Natural killer cell (primary cell): ENCODE measurements at regions of chr2 and their contacts with region 1.

Region 1: GRCh38 chr2:43131024-43131889 is 95.1 kb downstream of the ZFP36L2 start:
- DNase-seq: peak; percentile 82 to 92
- ATAC-seq: peak; percentile 63 to 81 (median 72)
- H3K4me3 ChIP-seq: no peak overlapping the region
- H3K4me3 Mint-ChIP-seq: peak overlapping the region; percentile 63
- H3K27ac ChIP-seq: peak overlapping the region; percentile 92
- H3K27ac Mint-ChIP-seq: peak overlapping the region; percentile 87 to 96
- H3K4me1 ChIP-seq: peaks cover 95% of the 10 kb centered on the region
- H3K4me1 Mint-ChIP-seq: peaks cover 80 to 89% of the 10 kb centered on the region in 2 donors
- H3K27me3 ChIP-seq: no peaks in the 10 kb centered on the region
- H3K27me3 Mint-ChIP-seq: no peaks in the 10 kb centered on the region
- CTCF ChIP-seq: peak; percentile 57

Region 2: GRCh38 chr2:42944779-42945415 is 186.4 kb before region 1 on chr2:
- intact Hi-C with region 1: loop called (anchors 5 kb)
- DNase-seq: no peak
- ATAC-seq: no peak
- H3K4me3 ChIP-seq: no peak overlapping the region
- H3K4me3 Mint-ChIP-seq: no peak overlapping the region
- H3K27ac ChIP-seq: no peak overlapping the region
- H3K27ac Mint-ChIP-seq: no peak overlapping the region
- H3K4me1 ChIP-seq: peaks cover 9% of the 10 kb centered on the region
- H3K4me1 Mint-ChIP-seq: peaks cover 5 to 16% of the 10 kb centered on the region in 2 donors
- H3K27me3 ChIP-seq: no peaks in the 10 kb centered on the region
- H3K27me3 Mint-ChIP-seq: peaks cover 0 to 3% of the 10 kb centered on the region in 2 donors
- CTCF ChIP-seq: no peak

Region 3: DNA sequence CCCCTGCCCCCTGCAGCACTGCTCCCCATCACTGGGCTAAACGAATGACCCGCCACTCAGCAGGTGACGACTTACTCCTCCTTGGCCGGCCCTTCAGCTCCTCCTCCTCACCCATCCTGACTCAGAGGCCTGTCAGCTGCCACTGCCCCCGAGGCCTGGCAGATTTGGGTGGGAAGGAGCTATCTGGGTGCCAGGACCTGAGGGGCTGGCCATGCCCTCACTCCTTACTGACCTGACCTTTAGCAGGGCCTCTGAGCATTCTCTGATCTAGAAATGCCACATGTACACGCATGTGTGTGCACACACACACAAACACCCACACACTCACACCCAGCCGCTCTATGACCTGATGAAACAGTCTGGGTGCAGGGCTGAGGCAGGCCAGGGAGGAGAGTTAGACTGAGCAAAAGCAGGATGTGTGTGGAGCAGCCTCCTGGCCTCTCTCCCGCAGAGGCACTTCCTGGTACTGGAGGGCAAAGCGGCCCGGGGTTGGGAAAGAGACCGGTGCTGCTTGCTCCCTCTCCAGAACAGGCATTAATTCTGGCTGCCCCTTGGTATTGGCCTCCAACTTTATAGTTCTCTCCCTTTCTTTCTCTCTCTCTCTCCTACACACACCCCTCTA is 27.1 kb after region 1 on chr2:
- intact Hi-C with region 1: loop called (anchors 1 kb)
- DNase-seq: peak; percentile 39 to 80
- ATAC-seq: peak; percentile 33 to 53 (median 41)
- H3K4me3 ChIP-seq: no peak overlapping the region
- H3K4me3 Mint-ChIP-seq: peak overlapping the region; percentile 64
- H3K27ac ChIP-seq: peak overlapping the region; percentile 97
- H3K27ac Mint-ChIP-seq: peak overlapping the region; percentile 95 to 97
- H3K4me1 ChIP-seq: peaks cover 76% of the 10 kb centered on the region
- H3K4me1 Mint-ChIP-seq: peaks cover 27 to 55% of the 10 kb centered on the region in 2 donors
- H3K27me3 ChIP-seq: no peaks in the 10 kb centered on the region
- H3K27me3 Mint-ChIP-seq: no peaks in the 10 kb centered on the region
- CTCF ChIP-seq: no peak

Region 4: GRCh38 chr2:43186679-43187374 is 55.6 kb after region 1 on chr2:
- intact Hi-C with region 1: no loop called
- DNase-seq: no peak
- ATAC-seq: no peak
- H3K4me3 ChIP-seq: no peak overlapping the region
- H3K4me3 Mint-ChIP-seq: no peak overlapping the region
- H3K27ac ChIP-seq: no peak overlapping the region
- H3K27ac Mint-ChIP-seq: peak overlapping the region in 1 of 2 donors; percentile 71
- H3K4me1 ChIP-seq: peaks cover 17% of the 10 kb centered on the region
- H3K4me1 Mint-ChIP-seq: peaks cover 15 to 40% of the 10 kb centered on the region in 2 donors
- H3K27me3 ChIP-seq: no peaks in the 10 kb centered on the region
- H3K27me3 Mint-ChIP-seq: peaks cover 0 to 2% of the 10 kb centered on the region in 2 donors
- CTCF ChIP-seq: no peak

Region 5: DNA sequence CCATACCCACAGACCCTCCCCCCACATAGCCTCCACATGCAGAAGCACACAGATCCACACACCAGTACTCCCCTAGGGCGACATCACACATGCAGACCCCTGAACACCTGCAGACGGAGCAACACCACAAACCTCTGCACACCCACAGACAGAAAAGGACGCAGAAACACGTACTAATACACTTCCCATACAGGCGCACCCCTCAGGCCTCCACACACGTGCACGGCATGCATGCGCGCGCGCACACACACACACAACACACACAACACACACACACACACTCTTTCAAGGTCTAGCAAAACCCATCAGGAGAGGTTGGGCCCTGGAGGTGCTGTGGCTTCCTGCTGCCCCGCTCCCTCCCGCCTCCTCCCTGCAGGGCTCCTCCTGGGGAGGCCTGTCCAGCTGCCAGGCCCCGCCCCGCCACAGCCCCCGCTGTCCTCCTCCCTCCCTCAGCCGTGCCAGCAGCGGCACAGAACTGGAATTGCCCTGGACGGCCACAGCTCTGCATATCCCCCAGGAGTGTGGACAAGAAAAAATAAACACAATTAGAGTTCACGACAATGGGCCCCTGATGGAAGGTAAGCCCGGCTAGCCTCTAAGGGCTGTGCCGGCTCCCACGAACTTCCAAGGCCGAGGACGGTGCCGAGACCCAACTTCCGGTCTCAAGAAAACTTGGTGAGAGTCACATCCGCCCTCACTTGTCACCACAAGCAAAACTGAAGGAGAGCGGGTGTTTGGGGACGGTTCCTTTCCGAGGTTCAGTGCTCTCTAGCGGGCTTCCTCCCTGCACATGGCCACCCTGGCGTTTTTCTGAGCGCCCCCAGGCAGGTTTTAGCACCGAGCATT is 88.3 kb after region 1 on chr2:
- intact Hi-C with region 1: loop called (anchors 1 kb)
- DNase-seq: peak; percentile 73 to 93
- ATAC-seq: peak; percentile 39 to 70 (median 57)
- H3K4me3 ChIP-seq: peak overlapping the region; percentile 92
- H3K4me3 Mint-ChIP-seq: peak overlapping the region; percentile 82
- H3K27ac ChIP-seq: peak overlapping the region; percentile 96
- H3K27ac Mint-ChIP-seq: peak overlapping the region; percentile 90 to 99
- H3K4me1 ChIP-seq: peaks cover 58% of the 10 kb centered on the region
- H3K4me1 Mint-ChIP-seq: peaks cover 66 to 68% of the 10 kb centered on the region in 2 donors
- H3K27me3 ChIP-seq: no peaks in the 10 kb centered on the region
- H3K27me3 Mint-ChIP-seq: peaks cover 0 to 4% of the 10 kb centered on the region in 2 donors
- CTCF ChIP-seq: no peak

Region 6: GRCh38 chr2:43475922-43476321 is 344.7 kb after region 1 on chr2:
- intact Hi-C with region 1: loop called (anchors 2 kb)
- DNase-seq: no peak
- ATAC-seq: no peak
- H3K4me3 ChIP-seq: no peak overlapping the region
- H3K4me3 Mint-ChIP-seq: no peak overlapping the region
- H3K27ac ChIP-seq: no peak overlapping the region
- H3K27ac Mint-ChIP-seq: no peak overlapping the region
- H3K4me1 ChIP-seq: no peaks in the 10 kb centered on the region
- H3K4me1 Mint-ChIP-seq: no peaks in the 10 kb centered on the region
- H3K27me3 ChIP-seq: no peaks in the 10 kb centered on the region
- H3K27me3 Mint-ChIP-seq: no peaks in the 10 kb centered on the region
- CTCF ChIP-seq: no peak